ENCODE measurements at regions of chr12 and their contacts with region 1.

Region 1: DNA sequence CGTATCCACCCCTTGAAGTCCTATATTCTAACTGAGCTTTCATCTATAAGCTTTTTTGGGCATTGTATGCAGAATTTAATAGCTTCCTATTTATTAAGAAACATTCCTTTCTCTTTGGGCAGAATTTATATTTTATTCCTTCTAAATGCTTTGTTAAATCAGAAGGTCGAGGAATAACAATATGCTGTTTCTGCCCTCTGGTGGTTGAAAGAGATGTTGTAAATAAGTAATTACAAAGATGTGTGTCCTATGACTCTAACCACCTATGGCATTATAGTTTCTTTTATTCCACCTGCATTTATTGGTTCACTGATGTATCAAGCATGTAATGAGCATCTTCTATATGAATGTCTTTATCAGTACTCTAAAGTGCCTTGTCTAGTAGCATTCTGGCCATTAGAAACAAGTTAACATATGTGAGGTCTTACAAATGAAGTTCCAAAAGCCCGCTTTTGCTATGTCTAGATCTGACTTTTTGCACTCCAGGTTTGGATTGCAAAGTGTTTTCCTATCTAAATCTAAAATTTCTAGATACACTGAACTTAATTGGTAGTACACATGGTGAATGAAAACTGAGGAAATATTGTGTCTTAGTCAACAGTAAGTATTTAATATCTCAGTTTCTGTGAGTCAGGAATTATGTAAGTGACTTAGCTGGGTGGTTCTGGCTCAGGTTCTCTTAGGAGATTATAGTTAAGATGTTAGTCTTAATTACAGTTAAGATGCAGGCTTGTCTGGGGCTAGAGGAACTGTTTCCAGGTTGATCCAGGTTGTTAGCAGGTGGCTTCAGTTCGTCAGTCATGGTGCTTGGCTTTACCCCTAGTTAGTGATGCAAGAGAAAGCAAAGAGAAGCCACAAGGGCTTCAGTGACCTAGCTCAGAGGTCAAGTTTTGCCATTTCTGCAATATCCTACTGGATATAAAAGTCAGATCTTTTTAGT is 57.5 kb downstream of the PLEKHA5 start:
- DNase-seq: no peak
- H3K4me3 ChIP-seq: no peak overlapping the region
- H3K27ac ChIP-seq: no peak overlapping the region
- H3K4me1 ChIP-seq: peaks cover 0 to 18% (median 0%) of the 10 kb centered on the region in 4 donors
- H3K27me3 ChIP-seq: no peaks in the 10 kb centered on the region
- CTCF ChIP-seq: peak; percentile 65 to 71 (median 70)
- EP300 ChIP-seq: no peak
- POLR2A ChIP-seq: no peak

Region 2: GRCh38 chr12:18139989-18140596 is 1046.9 kb before region 1 on chr12:
- in situ Hi-C with region 1: loop called in 1 of 4 experiments (anchors 25 kb)
- intact Hi-C with region 1: no loop called
- DNase-seq: no peak
- H3K4me3 ChIP-seq: no peak overlapping the region
- H3K27ac ChIP-seq: no peak overlapping the region
- H3K4me1 ChIP-seq: peaks cover 0 to 22% (median 8%) of the 10 kb centered on the region in 4 donors
- H3K27me3 ChIP-seq: no peaks in the 10 kb centered on the region
- CTCF ChIP-seq: peak; percentile 51 to 70 (median 64)
- EP300 ChIP-seq: no peak
- POLR2A ChIP-seq: no peak

Region 3: DNA sequence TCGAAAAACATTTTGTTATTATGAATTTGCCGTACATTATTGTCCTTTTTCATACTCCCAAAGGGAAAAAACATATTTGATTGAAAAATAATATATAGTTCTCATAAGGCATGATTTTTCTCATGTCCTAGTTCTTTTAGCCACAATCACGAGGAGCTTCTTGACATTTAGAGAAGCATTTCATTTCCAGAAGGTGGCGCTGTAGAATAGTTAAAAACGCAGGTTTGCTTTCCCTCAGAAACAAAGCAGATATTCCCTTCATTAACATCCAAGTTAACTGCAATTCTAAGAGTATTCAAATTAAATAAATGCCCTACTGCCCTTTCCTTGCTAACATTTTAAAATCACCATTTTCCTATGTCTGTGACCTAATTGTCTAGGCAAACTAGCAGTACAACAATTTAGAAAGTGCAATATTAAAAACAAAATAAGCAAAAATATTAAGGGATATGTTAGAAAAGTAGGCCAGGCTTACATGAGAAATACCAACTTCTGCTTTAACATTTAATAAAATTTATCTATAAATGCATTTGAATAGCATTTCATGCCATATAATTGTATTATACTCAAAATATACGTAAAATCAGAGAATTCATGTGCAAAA is 936.6 kb before region 1 on chr12:
- in situ Hi-C with region 1: loop called in 2 of 4 experiments (anchors 25 kb)
- intact Hi-C with region 1: no loop called
- DNase-seq: no peak
- H3K4me3 ChIP-seq: no peak overlapping the region
- H3K27ac ChIP-seq: no peak overlapping the region
- H3K4me1 ChIP-seq: peaks cover 0 to 4% (median 0%) of the 10 kb centered on the region in 4 donors
- H3K27me3 ChIP-seq: no peaks in the 10 kb centered on the region
- CTCF ChIP-seq: peak; percentile 55 to 73 (median 63)
- EP300 ChIP-seq: no peak
- POLR2A ChIP-seq: no peak

Region 4: DNA sequence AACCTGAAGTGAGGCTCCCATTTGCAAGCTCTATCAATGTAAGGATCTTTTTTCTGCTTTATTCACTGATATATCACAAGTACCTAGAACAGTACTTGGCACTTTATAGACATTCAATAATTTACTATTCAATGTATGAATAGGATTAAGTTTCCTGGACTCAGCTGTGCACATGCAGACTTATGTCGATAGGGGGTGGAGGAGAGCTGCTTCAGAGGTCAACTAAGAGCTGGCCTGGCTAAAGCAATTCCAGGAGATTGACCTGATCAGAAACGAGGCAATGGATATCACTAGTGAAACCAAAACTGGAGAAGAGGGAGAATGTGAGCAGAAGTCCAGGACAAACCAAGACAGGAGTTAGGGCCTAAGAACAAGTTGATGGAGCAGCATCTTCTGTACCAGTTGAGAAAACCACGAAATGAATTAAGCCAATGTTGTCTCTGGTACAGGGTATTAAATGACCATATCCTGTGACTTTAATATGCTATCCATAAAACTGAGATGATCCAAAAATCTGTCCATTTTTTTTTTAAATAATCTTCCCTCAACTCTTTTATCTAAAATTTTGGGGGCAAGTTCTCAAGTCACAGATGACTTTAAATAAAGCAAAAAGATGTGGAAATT is 756.5 kb before region 1 on chr12:
- in situ Hi-C with region 1: loop called in 2 of 4 experiments (anchors 25 kb)
- intact Hi-C with region 1: no loop called
- DNase-seq: peak; percentile 31
- H3K4me3 ChIP-seq: no peak overlapping the region
- H3K27ac ChIP-seq: no peak overlapping the region
- H3K4me1 ChIP-seq: no peaks in the 10 kb centered on the region
- H3K27me3 ChIP-seq: no peaks in the 10 kb centered on the region
- CTCF ChIP-seq: peak; percentile 62 to 79 (median 69)
- EP300 ChIP-seq: no peak
- POLR2A ChIP-seq: no peak

Region 5: GRCh38 chr12:18849761-18850160 is 337.2 kb before region 1 on chr12:
- in situ Hi-C with region 1: loop called in 3 of 4 experiments (anchors 10 to 25 kb)
- intact Hi-C with region 1: no loop called
- DNase-seq: no peak
- H3K4me3 ChIP-seq: no peak overlapping the region
- H3K27ac ChIP-seq: no peak overlapping the region
- H3K4me1 ChIP-seq: no peaks in the 10 kb centered on the region
- H3K27me3 ChIP-seq: no peaks in the 10 kb centered on the region
- CTCF ChIP-seq: no peak
- EP300 ChIP-seq: no peak
- POLR2A ChIP-seq: no peak

Region 6: GRCh38 chr12:18861287-18861858 is 325.6 kb before region 1 on chr12:
- in situ Hi-C with region 1: loop called in 3 of 4 experiments (anchors 10 to 25 kb)
- intact Hi-C with region 1: no loop called
- DNase-seq: no peak
- H3K4me3 ChIP-seq: no peak overlapping the region
- H3K27ac ChIP-seq: no peak overlapping the region
- H3K4me1 ChIP-seq: no peaks in the 10 kb centered on the region
- H3K27me3 ChIP-seq: no peaks in the 10 kb centered on the region
- CTCF ChIP-seq: peak; percentile 50 to 74 (median 65)
- EP300 ChIP-seq: no peak
- POLR2A ChIP-seq: no peak